Activated CD8-positive, alpha-beta T cell treated with anti-CD3 and anti-CD28 coated beads for 36 hours (primary cell): ENCODE measurements at regions of chr5 and their contacts with region 1.

Region 1: DNA sequence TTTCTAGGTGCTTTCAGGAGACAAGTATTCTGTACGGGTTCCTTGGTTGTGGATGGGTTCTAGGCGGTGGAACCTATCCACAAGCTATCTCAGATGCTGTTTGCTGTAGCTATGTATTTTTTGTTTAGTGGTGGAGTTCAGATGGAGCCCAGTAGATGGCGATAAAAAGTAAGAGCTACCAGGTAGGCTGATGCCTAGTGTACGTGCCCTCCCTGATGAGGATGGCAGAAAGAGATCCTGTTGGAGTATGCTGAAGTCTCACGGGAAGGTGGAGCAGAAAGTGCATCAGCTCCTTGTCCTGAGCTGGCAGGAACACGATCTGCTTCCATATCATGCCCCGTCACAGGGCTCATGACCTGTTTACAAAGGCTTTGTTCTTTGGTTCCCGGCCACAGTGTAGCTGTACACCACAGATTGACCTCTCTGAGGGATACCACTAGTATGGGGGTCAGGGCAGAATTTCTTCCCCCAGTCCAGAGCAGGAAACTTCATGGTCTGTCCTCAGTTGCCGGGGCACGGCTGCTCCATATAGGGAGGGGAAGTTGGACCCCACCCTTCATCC is 12.6 kb upstream of the UGT3A2 start:
- DNase-seq: peak; percentile 44
- ATAC-seq: peak; percentile 97
- H3K4me3 Mint-ChIP-seq: no peak overlapping the region
- H3K27ac Mint-ChIP-seq: no peak overlapping the region
- H3K4me1 Mint-ChIP-seq: no peaks in the 10 kb centered on the region
- H3K27me3 Mint-ChIP-seq: peaks cover 7% of the 10 kb centered on the region
- CTCF ChIP-seq: peak; percentile 78

Region 2: DNA sequence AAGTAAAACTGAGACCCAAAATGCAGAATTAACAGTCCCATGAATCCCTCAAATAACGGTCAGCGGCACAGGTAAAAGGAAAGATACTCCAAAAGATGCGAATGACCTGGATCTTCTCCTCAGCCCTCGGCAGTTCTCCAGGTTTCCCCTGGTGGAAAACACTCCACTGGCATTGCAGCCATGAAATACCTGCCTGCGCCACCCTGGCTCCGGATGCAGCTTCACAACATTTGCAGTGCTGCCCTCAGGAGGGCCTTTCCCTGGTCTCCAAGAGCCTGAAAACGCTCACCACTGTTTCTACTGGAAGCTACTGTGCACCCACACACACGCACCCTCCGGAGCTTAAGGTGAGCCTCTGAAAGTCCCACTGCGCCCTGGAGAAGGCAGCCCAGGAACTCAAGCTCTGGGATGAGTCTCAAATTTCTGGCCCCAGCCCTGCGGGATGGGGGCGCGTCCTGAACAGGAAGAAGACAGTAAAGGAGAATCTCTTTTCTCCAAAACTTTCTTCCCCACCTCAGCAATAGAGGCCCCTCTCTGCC is 13.2 kb before region 1 on chr5:
- CTCF ChIA-PET with region 1: interaction called, 15 read pairs
- POLR2A ChIA-PET with region 1: no interaction called
- intact Hi-C with region 1: no loop called
- DNase-seq: no peak
- ATAC-seq: no peak
- H3K4me3 Mint-ChIP-seq: no peak overlapping the region
- H3K27ac Mint-ChIP-seq: no peak overlapping the region
- H3K4me1 Mint-ChIP-seq: no peaks in the 10 kb centered on the region
- H3K27me3 Mint-ChIP-seq: peaks cover 22% of the 10 kb centered on the region
- CTCF ChIP-seq: no peak

Region 3: DNA sequence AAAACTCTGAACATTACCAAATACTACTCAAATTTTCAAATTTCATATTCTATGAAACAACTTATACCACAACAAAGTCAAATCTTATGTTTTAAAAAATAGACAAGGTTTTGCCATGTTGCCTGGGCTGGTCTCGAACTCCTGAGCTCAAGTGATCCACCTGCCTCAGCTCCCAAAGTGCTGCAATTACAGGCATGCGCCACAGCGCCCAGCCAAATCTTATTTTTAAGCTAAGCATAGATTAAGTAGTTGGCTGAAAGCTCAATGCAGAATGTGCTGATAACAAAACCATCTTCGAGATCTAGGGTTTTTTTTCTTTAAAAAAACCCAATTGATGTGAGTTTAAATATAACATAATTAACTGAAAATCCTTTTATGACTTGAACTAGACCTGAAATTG is 66.0 kb after region 1 on chr5:
- CTCF ChIA-PET with region 1: interaction called, 12 read pairs
- POLR2A ChIA-PET with region 1: no interaction called
- intact Hi-C with region 1: no loop called
- DNase-seq: no peak
- ATAC-seq: no peak
- H3K4me3 Mint-ChIP-seq: no peak overlapping the region
- H3K27ac Mint-ChIP-seq: no peak overlapping the region
- H3K4me1 Mint-ChIP-seq: peaks cover 29% of the 10 kb centered on the region
- H3K27me3 Mint-ChIP-seq: no peaks in the 10 kb centered on the region
- CTCF ChIP-seq: no peak

Region 4: GRCh38 chr5:36305571-36306326 is 226.5 kb after region 1 on chr5:
- CTCF ChIA-PET with region 1: interaction called, 13 read pairs
- POLR2A ChIA-PET with region 1: no interaction called
- intact Hi-C with region 1: no loop called
- DNase-seq: peak; percentile 39
- ATAC-seq: peak; percentile 37
- H3K4me3 Mint-ChIP-seq: no peak overlapping the region
- H3K27ac Mint-ChIP-seq: no peak overlapping the region
- H3K4me1 Mint-ChIP-seq: peaks cover 6% of the 10 kb centered on the region
- H3K27me3 Mint-ChIP-seq: peaks cover 1% of the 10 kb centered on the region
- CTCF ChIP-seq: peak; percentile 42

Region 5: GRCh38 chr5:36690041-36690961 is 611.0 kb after region 1 on chr5:
- CTCF ChIA-PET with region 1: interaction called, 3 read pairs
- POLR2A ChIA-PET with region 1: no interaction called
- intact Hi-C with region 1: loop called (anchors 10 kb)
- DNase-seq: peak; percentile 79
- ATAC-seq: peak; percentile 86
- H3K4me3 Mint-ChIP-seq: peak overlapping the region; percentile 76
- H3K27ac Mint-ChIP-seq: peak overlapping the region; percentile 47
- H3K4me1 Mint-ChIP-seq: peaks cover 11% of the 10 kb centered on the region
- H3K27me3 Mint-ChIP-seq: peaks cover 23% of the 10 kb centered on the region
- CTCF ChIP-seq: peak; percentile 81